Right ventricle myocardium inferior (tissue), 1 donor: ENCODE measurements at regions of chr9 and their contacts with region 1.

Region 1: DNA sequence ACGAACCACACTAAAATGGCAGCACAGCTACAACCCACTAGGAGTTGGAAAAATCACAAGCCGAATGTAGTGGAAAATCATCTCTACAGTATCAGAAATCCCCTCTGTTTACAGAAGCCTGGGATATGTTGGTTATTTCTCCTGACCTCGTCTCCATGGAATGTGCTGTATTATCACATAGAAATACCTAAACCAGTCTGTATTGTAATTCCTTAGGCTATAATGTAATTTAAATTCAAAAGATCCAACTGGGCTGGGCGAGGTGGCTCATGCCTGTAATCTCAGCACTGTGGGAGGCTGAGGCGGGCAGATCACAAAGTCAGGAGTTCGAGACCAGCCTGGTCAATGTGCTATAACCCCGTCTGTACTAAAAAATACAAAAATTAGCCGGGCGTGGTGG is 244.8 kb upstream of the MPDZ start:
- DNase-seq: no peak
- ATAC-seq: no peak

Region 2: GRCh38 chr9:13244181-13244580 is 280.1 kb before region 1 on chr9:
- intact Hi-C with region 1: no loop called
- DNase-seq: no peak
- ATAC-seq: no peak

Region 3: GRCh38 chr9:13450723-13451122 is 73.5 kb before region 1 on chr9:
- intact Hi-C with region 1: no loop called
- DNase-seq: no peak
- ATAC-seq: no peak

Region 4: GRCh38 chr9:13575558-13575957 is 51.3 kb after region 1 on chr9:
- intact Hi-C with region 1: loop called (anchors 5 kb)
- DNase-seq: no peak
- ATAC-seq: peak; percentile 42

Region 5: DNA sequence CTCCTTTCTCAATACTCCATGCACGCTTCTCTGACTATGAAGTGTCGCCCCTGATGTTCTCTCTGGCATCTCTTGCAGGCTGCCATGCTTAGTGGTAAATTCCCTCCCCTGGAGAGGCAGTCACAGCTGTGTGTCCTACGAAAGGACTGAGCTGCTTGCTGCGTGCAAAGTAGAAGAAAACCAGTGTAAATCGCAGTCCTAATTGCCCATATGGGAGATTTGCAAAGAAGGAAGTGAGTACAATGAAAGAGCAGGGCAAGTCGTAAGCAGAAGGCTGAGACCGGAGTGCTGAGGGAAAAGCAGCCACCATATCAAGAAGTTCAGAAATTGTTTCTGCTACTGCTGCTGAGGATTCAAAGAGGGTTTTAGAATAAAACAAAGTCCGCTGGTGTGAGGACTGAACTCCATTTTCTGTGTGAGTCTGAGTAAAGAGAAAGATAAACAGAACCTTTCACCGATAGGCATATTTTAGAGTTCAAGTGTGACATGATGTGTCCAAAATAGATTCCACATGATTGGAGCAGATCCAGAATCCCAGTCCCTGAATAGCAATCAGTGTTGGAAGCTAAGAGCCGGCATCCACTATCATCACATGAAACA is 263.1 kb after region 1 on chr9:
- intact Hi-C with region 1: no loop called
- DNase-seq: no peak
- ATAC-seq: peak; percentile 82